T-cell (primary cell): ENCODE measurements at regions of chr1 and their contacts with region 1.

Region 1: GRCh38 chr1:201511941-201512539 is 5.1 kb upstream of the CSRP1 start:
- DNase-seq: peak in 1 of 35 experiments; percentile 11
- ATAC-seq: no peak
- H3K4me3 ChIP-seq: no peak overlapping the region
- H3K4me3 Mint-ChIP-seq: no peak overlapping the region
- H3K27ac ChIP-seq: no peak overlapping the region
- H3K27ac Mint-ChIP-seq: no peak overlapping the region
- H3K4me1 ChIP-seq: peaks cover 6 to 13% of the 10 kb centered on the region in 2 experiments
- H3K4me1 Mint-ChIP-seq: peaks cover 0 to 18% (median 13%) of the 10 kb centered on the region in 3 donors
- H3K27me3 ChIP-seq: no peaks in the 10 kb centered on the region
- H3K27me3 Mint-ChIP-seq: no peaks in the 10 kb centered on the region

Region 2: GRCh38 chr1:201447911-201448871 is 63.8 kb before region 1 on chr1:
- CTCF ChIA-PET with region 1: interaction called, 17 to 22 read pairs
- POLR2A ChIA-PET with region 1: no interaction called
- DNase-seq: peak in 33 of 35 experiments; percentile 14 to 74 (median 43)
- ATAC-seq: peak; percentile 82 to 93 (median 86)
- H3K4me3 ChIP-seq: no peak overlapping the region
- H3K4me3 Mint-ChIP-seq: no peak overlapping the region
- H3K27ac ChIP-seq: no peak overlapping the region
- H3K27ac Mint-ChIP-seq: no peak overlapping the region
- H3K4me1 ChIP-seq: peaks cover 0 to 9% of the 10 kb centered on the region in 2 experiments
- H3K4me1 Mint-ChIP-seq: peaks cover 0 to 5% (median 3%) of the 10 kb centered on the region in 3 donors
- H3K27me3 ChIP-seq: peaks cover 0 to 26% of the 10 kb centered on the region in 2 experiments
- H3K27me3 Mint-ChIP-seq: peaks cover 16 to 17% of the 10 kb centered on the region in 2 donors

Region 3: GRCh38 chr1:201456499-201457309 is 55.3 kb before region 1 on chr1:
- CTCF ChIA-PET with region 1: interaction called in 1 of 2 experiments, 16 read pairs
- POLR2A ChIA-PET with region 1: no interaction called
- DNase-seq: no peak
- ATAC-seq: no peak
- H3K4me3 ChIP-seq: no peak overlapping the region
- H3K4me3 Mint-ChIP-seq: no peak overlapping the region
- H3K27ac ChIP-seq: no peak overlapping the region
- H3K27ac Mint-ChIP-seq: no peak overlapping the region
- H3K4me1 ChIP-seq: no peaks in the 10 kb centered on the region
- H3K4me1 Mint-ChIP-seq: peaks cover 0 to 7% (median 2%) of the 10 kb centered on the region in 3 donors
- H3K27me3 ChIP-seq: peaks cover 0 to 17% of the 10 kb centered on the region in 2 experiments
- H3K27me3 Mint-ChIP-seq: peaks cover 3 to 5% of the 10 kb centered on the region in 2 donors

Region 4: GRCh38 chr1:201481761-201482493 is 30.1 kb before region 1 on chr1:
- CTCF ChIA-PET with region 1: interaction called, 77 to 83 read pairs
- POLR2A ChIA-PET with region 1: no interaction called
- DNase-seq: peak; percentile 51 to 83 (median 73)
- ATAC-seq: peak; percentile 83 to 86 (median 85)
- H3K4me3 ChIP-seq: peak overlapping the region; percentile 9 to 66
- H3K4me3 Mint-ChIP-seq: peak overlapping the region; percentile 65 to 86 (median 73)
- H3K27ac ChIP-seq: no peak overlapping the region
- H3K27ac Mint-ChIP-seq: no peak overlapping the region
- H3K4me1 ChIP-seq: peaks cover 7 to 25% of the 10 kb centered on the region in 2 experiments
- H3K4me1 Mint-ChIP-seq: peaks cover 19 to 25% (median 20%) of the 10 kb centered on the region in 3 donors
- H3K27me3 ChIP-seq: peaks cover 2 to 21% of the 10 kb centered on the region in 2 experiments
- H3K27me3 Mint-ChIP-seq: peaks cover 10% of the 10 kb centered on the region in 2 donors

Region 5: DNA sequence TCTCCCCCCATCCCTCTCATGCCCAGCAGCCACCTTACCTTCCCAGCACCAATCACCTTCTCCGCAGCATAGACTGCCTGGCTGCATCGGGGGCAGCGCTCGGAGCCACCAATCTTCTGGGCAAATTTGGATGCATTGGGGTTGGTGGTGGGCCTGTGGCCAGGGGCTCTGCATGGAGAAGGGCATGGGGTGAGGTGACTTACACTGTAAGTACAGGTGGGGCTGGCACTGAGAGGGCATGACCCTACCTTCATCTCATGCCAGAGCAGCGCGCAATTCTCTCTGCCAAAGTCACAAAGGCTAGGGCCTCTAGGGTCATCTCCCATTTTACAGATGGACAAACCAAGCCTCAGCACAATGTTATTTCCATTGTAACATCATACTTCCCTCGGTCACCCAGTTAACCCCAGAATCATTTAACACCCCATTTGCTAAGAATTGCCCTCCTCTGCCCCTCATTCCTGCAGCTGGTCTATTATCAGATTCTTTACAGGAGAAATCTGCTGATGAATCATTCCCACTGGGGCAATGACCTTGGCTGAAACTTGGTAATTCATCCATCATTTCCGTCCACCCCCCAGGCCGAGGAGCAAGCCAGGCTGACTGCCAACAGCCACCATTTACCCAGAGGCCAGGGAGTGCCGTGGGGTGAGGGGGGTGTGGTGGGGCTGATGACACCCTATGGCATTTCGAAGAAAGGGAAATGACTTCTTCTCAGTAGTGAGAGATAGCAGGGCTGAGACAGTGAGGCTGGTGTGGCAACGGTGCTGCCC is 23.0 kb before region 1 on chr1:
- CTCF ChIA-PET with region 1: interaction called, 15 to 77 read pairs
- POLR2A ChIA-PET with region 1: no interaction called
- DNase-seq: peak in 3 of 35 experiments; percentile 18 to 28 (median 21)
- ATAC-seq: no peak
- H3K4me3 ChIP-seq: no peak overlapping the region
- H3K4me3 Mint-ChIP-seq: no peak overlapping the region
- H3K27ac ChIP-seq: no peak overlapping the region
- H3K27ac Mint-ChIP-seq: no peak overlapping the region
- H3K4me1 ChIP-seq: no peaks in the 10 kb centered on the region
- H3K4me1 Mint-ChIP-seq: no peaks in the 10 kb centered on the region
- H3K27me3 ChIP-seq: no peaks in the 10 kb centered on the region
- H3K27me3 Mint-ChIP-seq: no peaks in the 10 kb centered on the region

Region 6: DNA sequence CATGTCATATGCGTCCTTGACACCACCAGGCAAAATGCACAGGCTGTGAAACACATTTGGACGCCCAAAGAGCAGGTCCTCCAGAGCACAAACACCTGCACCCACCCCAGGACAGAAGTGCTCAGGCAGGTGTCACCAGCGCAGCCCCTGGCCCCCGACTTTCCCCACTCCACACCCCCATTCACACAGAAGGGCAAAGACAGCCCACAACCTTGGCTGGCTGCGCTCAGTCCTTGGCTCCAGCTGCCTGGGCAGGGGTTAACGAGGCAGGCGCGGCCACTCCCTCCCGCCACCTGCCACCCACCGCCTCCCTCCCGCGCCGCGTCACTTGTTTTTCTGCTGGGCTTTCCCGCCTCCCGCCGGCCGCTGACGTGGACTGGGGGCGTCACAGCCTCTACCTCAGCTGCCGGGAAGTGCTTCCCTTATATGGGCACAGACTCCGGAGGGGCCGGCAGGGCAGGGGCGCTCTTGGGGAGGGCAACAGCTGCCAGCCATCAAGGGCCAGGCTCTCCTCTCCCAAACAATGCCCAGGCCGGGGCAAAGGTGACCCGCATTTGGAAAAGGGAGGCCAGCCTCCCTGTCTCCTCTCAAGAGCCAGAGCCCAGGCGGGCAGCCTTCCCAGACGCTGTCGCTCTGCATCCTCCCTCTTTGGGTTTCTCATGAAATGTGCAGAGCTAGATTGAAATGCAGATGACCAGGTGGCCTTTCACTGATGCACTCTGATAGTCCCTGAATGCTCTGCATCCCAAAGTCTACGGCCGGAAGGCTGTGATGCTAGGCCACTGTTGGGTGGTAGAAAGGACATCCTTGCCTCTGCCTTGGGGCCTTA is 1778.4 kb after region 1 on chr1:
- CTCF ChIA-PET with region 1: no interaction called
- POLR2A ChIA-PET with region 1: no interaction called
- DNase-seq: peak; percentile 91 to 99 (median 98)
- ATAC-seq: peak; percentile 67 to 73 (median 71)
- H3K4me3 ChIP-seq: peak overlapping the region; percentile 30 to 49
- H3K4me3 Mint-ChIP-seq: peak overlapping the region; percentile 77 to 80 (median 78)
- H3K27ac ChIP-seq: peak overlapping the region; percentile 99
- H3K27ac Mint-ChIP-seq: peak overlapping the region; percentile 95 to 99
- H3K4me1 ChIP-seq: peaks cover 43 to 64% of the 10 kb centered on the region in 2 experiments
- H3K4me1 Mint-ChIP-seq: peaks cover 80 to 88% (median 83%) of the 10 kb centered on the region in 3 donors
- H3K27me3 ChIP-seq: no peaks in the 10 kb centered on the region
- H3K27me3 Mint-ChIP-seq: no peaks in the 10 kb centered on the region